Posterior vena cava (tissue), 2 donors: ENCODE measurements at regions of chr1 and their contacts with region 1.

Region 1: DNA sequence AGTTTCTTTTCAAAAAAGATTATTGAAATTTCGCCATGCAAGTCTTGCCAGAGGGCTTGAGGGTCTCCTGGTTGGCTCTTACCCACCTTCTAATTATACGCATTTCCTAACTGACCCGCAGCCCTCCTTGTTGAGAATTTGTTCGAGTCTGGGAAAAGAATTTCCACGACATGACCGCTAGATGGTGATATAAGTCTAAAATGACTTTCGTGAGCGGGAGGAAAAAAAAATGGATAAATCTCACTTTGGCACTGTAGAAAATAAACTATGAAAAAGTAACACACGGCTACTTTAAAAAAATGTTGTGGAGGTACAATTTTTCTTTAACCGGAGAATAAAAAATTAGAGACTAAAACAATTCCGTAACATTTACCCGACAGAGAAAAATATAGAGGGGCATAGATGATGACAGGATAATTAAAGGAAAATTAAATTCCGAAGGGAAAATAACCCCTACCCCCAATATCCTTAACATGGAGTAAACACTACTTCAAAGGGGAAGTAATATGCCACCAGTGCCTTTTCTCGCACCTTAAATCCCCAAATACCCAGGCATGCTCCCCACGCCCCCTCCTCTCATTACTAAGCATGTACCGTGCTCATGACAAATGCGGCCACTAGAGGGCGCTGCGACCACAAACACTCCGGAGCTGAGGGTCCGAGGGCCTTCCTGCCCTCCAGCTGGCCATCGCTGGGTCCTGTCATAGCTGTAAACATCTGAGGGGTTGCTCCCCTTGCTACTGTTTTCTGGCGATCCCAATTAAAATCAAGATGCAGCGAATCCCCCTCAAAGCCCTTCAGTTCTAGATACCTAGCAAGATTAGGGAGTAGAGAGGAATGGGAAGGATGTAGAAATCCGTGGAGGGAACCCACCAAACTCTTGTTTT is 266.9 kb downstream of the ASTN1 start:
- DNase-seq: no peak

Region 2: GRCh38 chr1:177077734-177078489 is 180.3 kb after region 1 on chr1:
- intact Hi-C with region 1: no loop called
- DNase-seq: no peak

Region 3: GRCh38 chr1:177181631-177182291 is 284.2 kb after region 1 on chr1:
- intact Hi-C with region 1: loop called in 1 of 2 experiments (anchors 10 kb)
- DNase-seq: peak; percentile 85

Region 4: DNA sequence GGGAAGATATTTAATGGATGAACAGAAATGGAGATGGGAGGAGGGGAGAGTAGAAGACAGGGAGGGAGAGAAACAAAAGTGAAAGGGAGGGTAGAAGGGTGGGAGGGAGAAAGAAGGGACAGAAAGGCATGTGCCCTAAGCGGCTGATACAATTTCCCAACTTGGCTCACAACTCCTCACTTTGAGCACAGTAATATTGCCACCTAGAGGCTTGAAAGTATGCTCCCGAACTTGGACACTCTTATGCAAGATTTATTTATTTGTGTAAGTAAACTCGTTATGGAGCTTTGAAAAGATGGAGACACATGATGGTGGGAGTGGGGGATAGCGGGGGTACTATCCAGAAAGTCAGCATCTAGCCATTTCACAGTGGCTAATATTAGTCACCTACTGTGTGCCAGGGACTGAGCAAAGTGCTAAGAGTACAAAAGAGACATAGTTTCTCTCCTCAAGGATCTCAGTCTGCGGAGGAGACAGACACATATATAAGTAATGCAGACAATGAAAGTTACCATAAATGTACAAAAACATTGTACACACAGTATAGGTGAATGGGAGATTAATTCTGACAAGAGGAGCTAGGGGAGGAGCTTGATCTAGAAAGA is 882.6 kb after region 1 on chr1:
- intact Hi-C with region 1: loop called in 1 of 2 experiments (anchors 10 kb)
- DNase-seq: no peak

Region 5: DNA sequence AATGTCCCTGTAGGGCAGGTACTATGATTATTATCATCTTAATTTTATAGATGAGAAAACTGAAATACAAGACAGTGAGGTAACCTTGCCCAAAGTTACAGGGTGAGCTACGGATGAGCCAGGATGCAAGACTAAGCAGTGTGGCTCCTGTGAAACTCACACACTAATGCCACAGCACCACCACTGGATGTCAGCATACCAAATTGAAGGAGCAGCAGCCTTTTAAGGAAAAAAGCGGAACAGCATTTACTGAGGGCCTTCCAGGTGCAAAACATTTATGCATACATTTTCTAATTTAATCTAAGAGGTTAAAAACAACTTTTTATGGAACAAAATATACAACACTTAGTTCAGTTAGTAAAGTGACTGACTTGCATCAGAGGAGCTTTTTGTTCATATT is 1030.6 kb after region 1 on chr1:
- intact Hi-C with region 1: loop called in 1 of 2 experiments (anchors 5 kb)
- DNase-seq: no peak

Region 6: DNA sequence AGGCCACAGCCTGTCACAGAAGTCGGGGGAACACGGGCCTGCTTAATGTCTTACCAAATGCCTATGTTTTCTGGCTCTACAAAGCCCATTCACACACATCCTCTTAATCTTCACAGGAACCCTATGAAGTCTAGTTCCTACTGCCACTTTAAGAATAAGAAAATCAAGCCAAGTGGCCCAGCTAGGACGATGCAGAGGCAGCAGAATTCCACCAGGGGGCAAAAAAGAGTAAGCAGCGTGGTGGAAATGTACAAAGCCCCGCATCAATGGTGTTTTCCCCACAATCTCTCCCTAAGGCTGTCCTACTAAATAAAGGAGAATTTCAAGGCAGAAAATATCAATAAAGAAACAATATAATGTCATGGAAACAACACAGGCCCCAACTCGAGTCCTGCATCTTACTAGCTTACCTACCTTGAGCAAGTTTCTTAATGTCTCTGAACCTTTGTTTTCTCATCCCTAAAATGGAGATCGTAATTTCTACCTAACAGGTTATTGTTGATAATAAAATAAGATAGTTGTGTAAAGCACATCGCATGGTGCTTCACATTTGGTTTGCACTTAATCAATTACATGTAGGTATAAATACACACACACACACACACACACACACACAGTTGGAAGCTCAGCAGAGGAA is 1050.9 kb after region 1 on chr1:
- intact Hi-C with region 1: loop called in 1 of 2 experiments (anchors 5 kb)
- DNase-seq: no peak